ENCODE measurements at regions of chr12 and their contacts with region 1.

Region 1: GRCh38 chr12:4276524-4277204 is 3.1 kb downstream of the CCND2 start:
- DNase-seq: peak; percentile 87
- H3K4me3 ChIP-seq: no peak overlapping the region
- H3K27ac ChIP-seq: no peak overlapping the region
- H3K4me1 ChIP-seq: peaks cover 18% of the 10 kb centered on the region
- H3K27me3 ChIP-seq: peaks cover 60% of the 10 kb centered on the region
- CTCF ChIP-seq: peak; percentile 90

Region 2: DNA sequence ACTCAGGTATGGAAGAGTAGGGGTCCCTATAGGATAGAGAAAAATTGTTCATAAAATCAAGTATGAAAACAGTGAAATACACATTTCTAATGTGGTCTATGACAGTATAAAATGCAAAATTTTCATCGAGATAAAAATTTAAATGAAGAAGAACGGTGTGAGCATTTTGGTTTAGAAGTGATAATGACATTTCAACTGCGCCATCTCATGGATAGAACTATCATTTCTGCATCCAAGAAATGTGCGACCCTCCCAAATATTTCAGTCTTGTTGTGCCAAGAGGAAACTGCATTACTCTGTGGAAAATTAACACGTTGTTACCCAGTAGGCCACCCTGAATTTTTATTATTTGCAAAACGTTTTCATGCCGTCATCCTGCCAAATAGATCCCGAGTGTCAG is 632.6 kb before region 1 on chr12:
- CTCF ChIA-PET with region 1: no interaction called
- POLR2A ChIA-PET with region 1: no interaction called
- intact Hi-C with region 1: no loop called
- DNase-seq: peak; percentile 7
- H3K4me3 ChIP-seq: no peak overlapping the region
- H3K27ac ChIP-seq: no peak overlapping the region
- H3K4me1 ChIP-seq: no peaks in the 10 kb centered on the region
- H3K27me3 ChIP-seq: peaks cover 11% of the 10 kb centered on the region
- CTCF ChIP-seq: peak; percentile 37; the same call in 1 of the 2 replicates

Region 3: DNA sequence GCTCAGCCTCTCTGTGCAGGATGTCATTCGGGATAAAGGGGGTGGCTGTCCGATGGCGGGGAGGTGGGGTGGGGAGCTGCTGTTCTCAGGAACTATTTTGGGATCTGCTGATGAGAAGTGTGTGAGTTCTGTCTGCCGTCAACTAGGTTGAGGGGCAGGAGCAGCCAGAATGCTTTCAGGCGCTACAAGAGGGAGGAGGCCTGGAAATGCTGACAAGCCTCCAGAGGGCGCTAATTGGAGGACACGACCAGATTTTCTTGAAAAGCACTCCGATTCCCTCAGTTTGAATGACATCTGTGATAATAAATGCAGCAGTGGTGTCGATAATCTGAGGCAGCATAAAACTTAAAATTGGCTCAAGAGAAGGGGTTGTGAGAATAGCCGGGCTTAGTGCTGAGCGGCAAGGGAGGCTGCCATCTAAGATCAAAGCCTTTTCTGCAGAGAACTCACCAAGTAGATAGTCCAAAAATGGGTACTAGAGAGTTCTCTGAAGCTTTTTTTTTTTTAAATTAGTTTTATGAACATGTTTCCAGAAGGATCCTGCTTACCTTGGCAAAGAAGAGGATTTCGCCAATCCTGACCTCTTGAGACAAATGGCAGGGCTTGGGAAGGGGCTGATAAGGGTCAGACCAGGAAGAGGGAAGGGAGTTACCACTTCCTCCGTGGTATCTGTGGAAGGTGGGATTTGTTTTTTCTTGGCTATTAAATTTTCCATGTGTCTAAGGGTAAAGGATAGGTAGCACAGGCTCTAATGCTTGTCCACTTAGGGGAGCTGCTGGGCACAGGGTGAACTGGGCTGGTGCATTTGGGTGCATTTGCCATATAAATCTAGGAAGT is 618.1 kb before region 1 on chr12:
- CTCF ChIA-PET with region 1: no interaction called
- POLR2A ChIA-PET with region 1: no interaction called
- intact Hi-C with region 1: loop called (anchors 5 kb)
- DNase-seq: peak; percentile 70
- H3K4me3 ChIP-seq: no peak overlapping the region
- H3K27ac ChIP-seq: no peak overlapping the region
- H3K4me1 ChIP-seq: no peaks in the 10 kb centered on the region
- H3K27me3 ChIP-seq: peaks cover 43% of the 10 kb centered on the region
- CTCF ChIP-seq: peak; percentile 81

Region 4: DNA sequence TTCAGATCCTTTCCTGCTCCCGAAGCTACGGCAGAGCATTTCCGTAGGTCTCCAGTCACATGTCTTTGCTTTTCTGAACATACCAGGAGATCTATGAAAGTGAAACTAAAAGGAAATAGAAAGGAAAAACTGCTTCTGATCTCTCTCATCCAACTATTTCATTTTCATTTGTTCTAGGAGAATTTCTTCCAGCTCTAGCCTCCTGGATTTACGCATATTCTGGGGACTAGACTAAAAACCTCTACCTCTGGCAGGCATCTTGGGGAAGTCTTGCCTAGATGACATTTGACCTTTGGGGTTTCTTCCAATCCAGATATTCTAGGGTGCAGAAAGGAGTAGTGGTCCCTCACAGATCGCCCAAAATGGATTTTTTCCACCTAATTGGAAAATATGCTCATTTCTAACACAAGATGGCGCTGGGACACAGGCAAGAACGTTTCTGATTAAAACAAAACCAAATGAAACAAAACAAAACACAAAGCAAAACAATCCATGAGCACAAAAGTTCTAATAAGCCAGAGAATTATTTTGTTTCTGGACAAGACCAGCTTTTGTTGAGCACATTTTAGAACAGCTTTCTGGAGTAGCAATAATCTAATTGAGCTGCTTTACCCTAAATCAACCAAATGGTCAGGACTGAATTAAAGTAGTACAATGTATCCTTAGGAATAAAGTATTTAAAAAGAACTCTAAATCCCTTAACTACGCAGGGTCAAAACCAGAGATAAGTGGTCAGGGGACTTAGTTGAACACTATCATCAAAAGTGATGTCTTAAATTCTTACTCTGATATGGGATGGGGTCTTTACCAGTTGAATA is 391.2 kb before region 1 on chr12:
- CTCF ChIA-PET with region 1: interaction called, 18 read pairs
- POLR2A ChIA-PET with region 1: no interaction called
- intact Hi-C with region 1: loop called (anchors 1 kb)
- DNase-seq: peak; percentile 53
- H3K4me3 ChIP-seq: peak overlapping the region; percentile 0
- H3K27ac ChIP-seq: no peak overlapping the region
- H3K4me1 ChIP-seq: no peaks in the 10 kb centered on the region
- H3K27me3 ChIP-seq: peaks cover 8% of the 10 kb centered on the region
- CTCF ChIP-seq: peak; percentile 77

Region 5: DNA sequence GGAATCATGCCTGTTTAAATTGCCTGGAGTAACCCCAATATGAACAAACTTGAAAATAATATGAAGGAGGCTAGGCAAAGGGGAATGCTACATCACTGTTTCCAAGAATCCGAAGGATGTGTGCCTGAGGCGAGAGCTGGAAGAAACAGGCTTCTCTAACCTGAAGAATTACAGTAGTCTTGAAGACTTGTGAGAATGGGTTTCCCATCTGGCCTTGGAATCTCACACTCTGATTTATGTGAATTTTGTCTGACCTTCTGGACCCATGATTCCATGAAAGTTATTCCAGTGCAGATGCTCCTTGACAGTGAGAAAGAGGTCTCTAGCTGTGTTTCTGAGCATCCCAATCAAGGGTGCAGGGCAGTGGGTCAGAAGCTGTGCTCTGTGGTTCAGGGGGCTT is 281.4 kb before region 1 on chr12:
- CTCF ChIA-PET with region 1: interaction called, 9 read pairs
- POLR2A ChIA-PET with region 1: no interaction called
- intact Hi-C with region 1: loop called (anchors 2 kb)
- DNase-seq: no peak
- H3K4me3 ChIP-seq: no peak overlapping the region
- H3K27ac ChIP-seq: no peak overlapping the region
- H3K4me1 ChIP-seq: no peaks in the 10 kb centered on the region
- H3K27me3 ChIP-seq: peaks cover 25% of the 10 kb centered on the region
- CTCF ChIP-seq: no peak

Region 6: DNA sequence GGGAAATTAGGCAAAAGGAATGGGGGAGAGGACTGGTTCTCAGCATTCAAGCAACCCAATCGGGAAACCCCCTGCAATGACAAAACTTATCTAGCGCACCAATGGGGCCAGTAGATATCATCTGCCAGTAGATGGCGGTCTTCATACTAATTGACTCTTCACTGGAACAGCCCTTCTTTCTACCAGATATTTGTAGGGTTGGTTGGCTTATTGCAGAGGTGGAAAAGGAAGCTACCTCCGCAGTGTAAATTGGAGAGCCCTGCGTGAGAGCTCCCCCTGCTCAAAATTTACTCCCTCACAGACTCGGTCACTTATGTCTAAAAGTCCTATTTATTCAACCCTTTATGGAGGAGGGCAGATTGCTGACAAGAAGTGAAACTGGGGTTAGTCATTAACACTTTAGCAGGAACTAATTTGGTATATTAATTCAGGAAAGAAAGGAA is 169.2 kb before region 1 on chr12:
- CTCF ChIA-PET with region 1: interaction called, 17 read pairs
- POLR2A ChIA-PET with region 1: no interaction called
- intact Hi-C with region 1: loop called (anchors 2 kb)
- DNase-seq: peak; percentile 66
- H3K4me3 ChIP-seq: no peak overlapping the region
- H3K27ac ChIP-seq: no peak overlapping the region
- H3K4me1 ChIP-seq: no peaks in the 10 kb centered on the region
- H3K27me3 ChIP-seq: peaks cover 9% of the 10 kb centered on the region
- CTCF ChIP-seq: peak; percentile 71

Region 7: GRCh38 chr12:4555804-4556203 is 279.1 kb after region 1 on chr12:
- CTCF ChIA-PET with region 1: no interaction called
- POLR2A ChIA-PET with region 1: no interaction called
- intact Hi-C with region 1: no loop called
- DNase-seq: no peak
- H3K4me3 ChIP-seq: no peak overlapping the region
- H3K27ac ChIP-seq: no peak overlapping the region
- H3K4me1 ChIP-seq: no peaks in the 10 kb centered on the region
- H3K27me3 ChIP-seq: no peaks in the 10 kb centered on the region
- CTCF ChIP-seq: no peak

Region 8: DNA sequence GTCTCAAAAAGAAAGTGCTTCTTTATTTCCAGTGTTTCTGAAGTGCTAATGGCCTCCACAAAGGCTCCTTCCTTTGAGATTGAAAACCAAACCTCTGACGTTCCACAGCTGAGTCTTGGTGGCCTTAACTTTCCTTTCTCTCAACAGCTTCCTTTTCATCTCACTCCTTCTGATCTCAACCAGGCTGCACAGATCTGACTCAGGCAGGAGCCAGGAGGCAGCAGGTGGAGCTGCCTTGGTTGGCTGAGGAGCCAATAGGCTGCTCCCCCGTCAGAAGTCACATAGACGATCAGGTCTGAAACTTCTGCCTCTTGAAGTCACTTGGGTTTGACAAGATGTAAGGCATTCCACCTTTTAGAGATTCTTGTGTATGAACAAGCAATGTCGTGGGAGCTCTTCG is 757.9 kb after region 1 on chr12:
- CTCF ChIA-PET with region 1: interaction called, 11 read pairs
- POLR2A ChIA-PET with region 1: no interaction called
- intact Hi-C with region 1: no loop called
- DNase-seq: no peak
- H3K4me3 ChIP-seq: no peak overlapping the region
- H3K27ac ChIP-seq: no peak overlapping the region
- H3K4me1 ChIP-seq: no peaks in the 10 kb centered on the region
- H3K27me3 ChIP-seq: peaks cover 36% of the 10 kb centered on the region
- CTCF ChIP-seq: no peak